Right cardiac atrium (tissue), 5 donors: ENCODE measurements at regions of chr7 and their contacts with region 1.

Region 1: DNA sequence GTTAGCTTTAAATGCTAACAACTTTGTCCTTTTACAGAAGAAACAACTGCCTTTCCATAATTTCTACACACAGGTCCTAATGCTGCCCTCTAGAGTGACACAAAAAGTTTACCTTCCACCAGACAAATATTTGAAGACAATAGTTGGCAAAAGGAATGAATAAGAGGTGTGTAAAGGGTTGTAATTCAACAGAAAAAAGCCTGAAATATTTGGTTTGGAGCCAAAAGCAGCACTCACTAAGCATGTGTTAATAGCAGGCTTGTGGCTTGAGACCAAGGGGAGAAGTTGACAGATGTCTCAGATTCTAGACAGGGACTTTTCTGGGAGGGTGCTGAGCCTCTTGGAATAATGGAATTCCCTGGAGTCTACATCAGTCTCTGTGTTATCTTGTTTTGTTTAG is 156.2 kb upstream of the GALNT17 start:
- DNase-seq: no peak
- ATAC-seq: no peak
- H3K4me3 ChIP-seq: no peak overlapping the region
- H3K27ac ChIP-seq: no peak overlapping the region
- H3K4me1 ChIP-seq: no peaks in the 10 kb centered on the region
- H3K27me3 ChIP-seq: no peaks in the 10 kb centered on the region

Region 2: DNA sequence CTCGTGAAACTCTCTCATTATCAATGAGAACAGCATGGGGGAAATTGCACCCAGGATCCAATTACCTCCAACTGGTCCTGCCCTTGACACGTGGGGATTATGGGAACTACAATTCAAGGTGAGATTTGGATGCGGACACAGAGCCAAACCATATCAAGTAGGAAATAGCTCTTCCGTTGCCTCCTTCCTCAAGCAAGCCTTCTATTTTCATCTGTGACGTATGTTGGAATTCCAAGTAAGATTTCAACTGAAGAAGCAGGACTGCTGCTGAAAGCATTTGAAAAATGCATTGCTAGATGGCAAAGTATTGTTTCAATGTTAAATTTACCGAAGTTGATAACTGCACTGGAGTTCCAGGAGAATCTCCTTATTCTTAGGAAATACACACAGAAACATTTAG is 22.0 kb before region 1 on chr7:
- intact Hi-C with region 1: loop called in 2 of 4 experiments (anchors 2 kb)
- DNase-seq: no peak
- ATAC-seq: no peak
- H3K4me3 ChIP-seq: no peak overlapping the region
- H3K27ac ChIP-seq: no peak overlapping the region
- H3K4me1 ChIP-seq: no peaks in the 10 kb centered on the region
- H3K27me3 ChIP-seq: no peaks in the 10 kb centered on the region

Region 3: GRCh38 chr7:71050492-71050891 is 74.7 kb after region 1 on chr7:
- intact Hi-C with region 1: no loop called
- DNase-seq: no peak
- ATAC-seq: no peak
- H3K4me3 ChIP-seq: no peak overlapping the region
- H3K27ac ChIP-seq: no peak overlapping the region
- H3K4me1 ChIP-seq: no peaks in the 10 kb centered on the region
- H3K27me3 ChIP-seq: no peaks in the 10 kb centered on the region

Region 4: DNA sequence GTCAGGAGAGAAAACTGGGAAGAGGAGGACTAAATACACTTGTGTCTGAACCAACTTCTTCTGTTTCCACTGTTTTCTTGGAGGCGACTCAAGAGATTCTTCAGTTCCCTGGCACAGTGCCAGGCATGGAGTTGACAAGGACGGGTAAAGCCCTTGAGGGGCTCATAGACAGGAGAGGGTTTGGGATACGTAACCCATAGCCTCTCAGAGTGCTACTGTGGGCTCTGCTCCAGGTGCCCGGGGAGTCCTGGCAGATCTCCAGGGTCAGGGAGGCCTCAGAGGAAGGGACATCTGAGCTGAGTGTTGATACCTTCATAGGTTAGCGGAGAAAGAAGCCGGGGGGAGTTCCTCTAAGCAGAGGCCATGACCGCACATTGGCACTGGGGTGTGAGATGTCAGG is 198.2 kb after region 1 on chr7:
- intact Hi-C with region 1: no loop called
- DNase-seq: peak in 1 of 3 donors; percentile 48
- ATAC-seq: no peak
- H3K4me3 ChIP-seq: no peak overlapping the region
- H3K27ac ChIP-seq: no peak overlapping the region
- H3K4me1 ChIP-seq: no peaks in the 10 kb centered on the region
- H3K27me3 ChIP-seq: no peaks in the 10 kb centered on the region